ENCODE measurements at regions of chr1 and their contacts with region 1.

Region 1: DNA sequence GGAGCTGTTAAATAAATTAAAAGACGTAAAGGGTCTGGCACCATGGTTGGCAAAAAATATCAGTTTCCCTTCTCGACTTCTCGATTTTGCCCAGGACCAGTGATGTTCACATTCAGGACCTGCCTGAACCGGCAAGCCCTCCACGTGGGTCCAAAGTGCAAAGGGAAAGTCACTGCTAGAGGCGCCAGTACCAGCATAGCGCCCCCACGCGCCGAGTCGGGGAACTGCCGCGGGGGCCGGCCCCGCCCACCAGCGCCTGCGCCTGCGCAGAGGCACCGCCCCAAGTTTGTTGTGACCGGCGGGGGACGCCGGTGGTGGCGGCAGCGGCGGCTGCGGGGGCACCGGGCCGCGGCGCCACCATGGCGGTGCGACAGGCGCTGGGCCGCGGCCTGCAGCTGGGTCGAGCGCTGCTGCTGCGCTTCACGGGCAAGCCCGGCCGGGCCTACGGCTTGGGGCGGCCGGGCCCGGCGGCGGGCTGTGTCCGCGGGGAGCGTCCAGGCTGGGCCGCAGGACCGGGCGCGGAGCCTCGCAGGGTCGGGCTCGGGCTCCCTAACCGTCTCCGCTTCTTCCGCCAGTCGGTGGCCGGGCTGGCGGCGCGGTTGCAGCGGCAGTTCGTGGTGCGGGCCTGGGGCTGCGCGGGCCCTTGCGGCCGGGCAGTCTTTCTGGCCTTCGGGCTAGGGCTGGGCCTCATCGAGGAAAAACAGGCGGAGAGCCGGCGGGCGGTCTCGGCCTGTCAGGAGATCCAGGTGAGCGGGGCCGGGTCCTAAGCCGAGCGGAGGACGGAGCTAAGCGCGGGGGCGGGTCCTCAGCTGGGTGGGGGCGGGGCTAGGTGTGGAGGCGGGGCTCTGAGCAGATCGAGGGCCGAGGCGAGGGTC is at the start of gene PINK1:
- DNase-seq: peak; percentile 90 to 96 (median 95)
- ATAC-seq: peak; percentile 95
- H3K4me3 ChIP-seq: peak within 1 kb of the TSS; percentile 96
- H3K27ac ChIP-seq: peak within 1 kb of the TSS; percentile 74
- H3K4me1 ChIP-seq: peaks cover 12% of the 10 kb centered on the region in 2 experiments; a peak in 4 of 5 replicates
- H3K27me3 ChIP-seq: no peaks in the 10 kb centered on the region
- CTCF ChIP-seq: peak; percentile 97 to 98 (median 98)
- EP300 ChIP-seq: 0 out of 2 replicates have a peak, but pooled peaks have one; percentile 3
- POLR2A ChIP-seq: no peak
- RAD21 ChIP-seq: peak; percentile 54 to 78
- polyA plus RNA-seq, gene PINK1: 1.5 to 2.2 TPM

Region 2: GRCh38 chr1:20521960-20522861 is 111.2 kb before region 1 on chr1:
- CTCF ChIA-PET with region 1: interaction called, 14 read pairs
- POLR2A ChIA-PET with region 1: interaction called, 3 read pairs
- in situ Hi-C with region 1: loop called (anchors 5 kb)
- intact Hi-C with region 1: no loop called
- DNase-seq: peak; percentile 69 to 85 (median 82)
- ATAC-seq: peak; percentile 92
- H3K4me3 ChIP-seq: no peak overlapping the region
- H3K27ac ChIP-seq: no peak overlapping the region
- H3K4me1 ChIP-seq: no peaks in the 10 kb centered on the region; a peak in 2 of 5 replicates
- H3K27me3 ChIP-seq: peaks cover 22 to 37% of the 10 kb centered on the region in 2 experiments
- CTCF ChIP-seq: peak; percentile 95 to 98 (median 95)
- EP300 ChIP-seq: no peak
- POLR2A ChIP-seq: no peak
- RAD21 ChIP-seq: peak; percentile 88 to 96

Region 3: GRCh38 chr1:20528221-20528620 is 105.2 kb before region 1 on chr1:
- CTCF ChIA-PET with region 1: no interaction called
- POLR2A ChIA-PET with region 1: interaction called, 3 read pairs
- in situ Hi-C with region 1: loop called (anchors 5 kb)
- intact Hi-C with region 1: no loop called
- DNase-seq: no peak
- ATAC-seq: no peak
- H3K4me3 ChIP-seq: no peak overlapping the region
- H3K27ac ChIP-seq: no peak overlapping the region
- H3K4me1 ChIP-seq: no peaks in the 10 kb centered on the region; a peak in 1 of 5 replicates
- H3K27me3 ChIP-seq: peaks cover 26 to 74% of the 10 kb centered on the region in 2 experiments
- CTCF ChIP-seq: no peak
- EP300 ChIP-seq: no peak
- POLR2A ChIP-seq: no peak
- RAD21 ChIP-seq: no peak

Region 4: DNA sequence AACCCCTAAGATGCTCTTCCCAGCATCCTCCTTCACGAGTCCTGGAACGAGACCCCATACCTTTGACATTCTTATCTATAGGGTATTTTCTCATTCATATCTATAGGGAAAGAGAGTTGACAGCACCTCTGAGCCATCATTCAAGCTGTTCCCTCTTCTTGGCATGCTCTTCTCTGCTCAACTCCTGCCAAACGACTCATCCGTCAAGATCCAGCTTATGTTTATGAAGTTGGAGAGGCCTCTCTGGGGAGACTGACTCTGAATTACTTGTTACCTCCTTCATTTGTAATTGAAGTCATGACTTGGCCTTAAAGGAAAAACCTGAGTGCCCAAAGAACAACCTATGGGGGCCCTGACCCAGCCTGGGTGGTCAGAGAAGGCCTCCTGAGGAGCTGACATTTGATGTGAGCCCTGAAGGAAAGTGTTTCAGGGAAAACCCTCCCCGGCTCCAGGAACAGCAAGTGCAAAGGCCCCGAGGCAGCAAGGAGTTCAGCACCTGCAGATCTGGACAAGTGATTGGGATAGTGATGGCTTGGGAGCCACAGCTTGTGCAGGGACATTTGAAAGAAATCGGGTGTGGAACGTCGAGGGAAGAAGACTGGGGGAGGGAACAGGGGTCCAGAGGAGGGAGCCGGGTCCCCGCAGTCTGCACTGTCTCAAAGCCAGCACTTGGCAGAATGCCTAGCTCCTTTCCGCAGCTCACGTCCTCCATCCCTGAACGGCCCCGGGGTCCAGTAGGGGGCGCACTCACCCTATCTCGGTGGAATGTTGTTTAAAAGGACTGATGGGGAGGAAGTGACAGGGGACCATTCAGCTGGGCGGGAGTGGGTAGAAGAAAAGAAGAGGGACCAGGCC is 58.5 kb before region 1 on chr1:
- CTCF ChIA-PET with region 1: interaction called, 10 read pairs
- POLR2A ChIA-PET with region 1: interaction called, 3 read pairs
- in situ Hi-C with region 1: no loop called
- intact Hi-C with region 1: loop called (anchors 1 kb)
- DNase-seq: peak; percentile 90 to 91 (median 90)
- ATAC-seq: peak; percentile 98
- H3K4me3 ChIP-seq: no peak overlapping the region
- H3K27ac ChIP-seq: no peak overlapping the region
- H3K4me1 ChIP-seq: peaks cover 0 to 9% of the 10 kb centered on the region in 2 experiments; a peak in 2 of 5 replicates
- H3K27me3 ChIP-seq: peaks cover 9 to 10% of the 10 kb centered on the region in 2 experiments; a peak in 4 of 5 replicates
- CTCF ChIP-seq: peak; percentile 87 to 96 (median 93)
- EP300 ChIP-seq: no peak
- POLR2A ChIP-seq: no peak
- RAD21 ChIP-seq: peak; percentile 47 to 87; a peak in 3 of 4 replicates

Measured in K562 (cell line).